AG04450 (cell line): ENCODE measurements at regions of chr1 and their contacts with region 1.

Region 1: GRCh38 chr1:179002552-179003345 is 22.9 kb upstream of the FAM20B start:
- DNase-seq: peak; percentile 32
- H3K4me3 ChIP-seq: no peak overlapping the region
- H3K27ac ChIP-seq: no peak overlapping the region
- H3K27me3 ChIP-seq: no peaks in the 10 kb centered on the region
- CTCF ChIP-seq: peak; percentile 97

Region 2: GRCh38 chr1:178300352-178300699 is 702.4 kb before region 1 on chr1:
- CTCF ChIA-PET with region 1: interaction called, 16 read pairs
- POLR2A ChIA-PET with region 1: no interaction called
- DNase-seq: no peak
- H3K4me3 ChIP-seq: no peak overlapping the region
- H3K27ac ChIP-seq: no peak overlapping the region
- H3K27me3 ChIP-seq: no peaks in the 10 kb centered on the region
- CTCF ChIP-seq: no peak

Region 3: GRCh38 chr1:178532392-178532791 is 470.4 kb before region 1 on chr1:
- CTCF ChIA-PET with region 1: interaction called, 176 read pairs
- POLR2A ChIA-PET with region 1: no interaction called
- DNase-seq: peak; percentile 63
- H3K4me3 ChIP-seq: no peak overlapping the region
- H3K27ac ChIP-seq: no peak overlapping the region
- H3K27me3 ChIP-seq: no peaks in the 10 kb centered on the region
- CTCF ChIP-seq: peak; percentile 90

Region 4: DNA sequence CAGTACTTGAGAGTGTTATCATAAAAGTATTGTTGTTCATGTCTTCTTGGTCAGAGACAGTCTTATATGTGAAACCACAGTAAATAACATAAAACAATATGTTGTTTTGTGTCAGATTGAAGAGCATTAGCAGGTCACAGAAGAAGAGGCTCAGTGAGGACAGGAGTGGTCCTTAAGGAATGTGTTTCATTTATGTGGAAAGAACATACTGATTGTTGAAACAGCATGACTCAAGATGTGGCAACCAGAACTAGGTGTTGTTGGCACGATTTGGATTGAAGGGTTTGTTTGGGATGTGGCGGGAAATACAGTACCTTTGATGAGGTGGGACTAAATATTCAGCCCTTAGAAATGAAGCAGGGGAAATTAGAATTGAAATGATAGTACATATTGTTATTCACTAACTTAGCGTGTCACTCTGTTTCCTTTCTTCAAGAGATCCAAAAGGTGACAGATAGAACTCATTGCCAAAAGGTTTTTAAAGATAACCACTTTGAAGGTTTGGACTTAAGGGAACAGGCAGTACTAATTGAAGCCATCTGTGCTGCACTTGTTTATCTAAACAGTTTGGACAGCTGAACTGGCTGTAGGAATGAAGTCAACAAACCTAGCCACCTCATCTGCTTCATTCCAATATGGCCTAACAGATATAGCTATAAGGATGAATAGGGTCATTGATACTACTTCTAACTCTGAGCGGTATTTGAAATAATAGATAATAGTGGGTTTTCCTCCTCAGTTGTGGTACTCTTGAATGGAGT is 263.3 kb before region 1 on chr1:
- CTCF ChIA-PET with region 1: interaction called, 10 read pairs
- POLR2A ChIA-PET with region 1: no interaction called
- DNase-seq: peak; percentile 51
- H3K4me3 ChIP-seq: no peak overlapping the region
- H3K27ac ChIP-seq: no peak overlapping the region
- H3K27me3 ChIP-seq: no peaks in the 10 kb centered on the region
- CTCF ChIP-seq: no peak

Region 5: GRCh38 chr1:178849918-178850317 is 152.8 kb before region 1 on chr1:
- CTCF ChIA-PET with region 1: interaction called, 15 read pairs
- POLR2A ChIA-PET with region 1: no interaction called
- DNase-seq: no peak
- H3K4me3 ChIP-seq: no peak overlapping the region
- H3K27ac ChIP-seq: no peak overlapping the region
- H3K27me3 ChIP-seq: no peaks in the 10 kb centered on the region
- CTCF ChIP-seq: no peak

Region 6: GRCh38 chr1:178908358-178908757 is 94.4 kb before region 1 on chr1:
- CTCF ChIA-PET with region 1: interaction called, 10 read pairs
- POLR2A ChIA-PET with region 1: no interaction called
- DNase-seq: no peak
- H3K4me3 ChIP-seq: no peak overlapping the region
- H3K27ac ChIP-seq: no peak overlapping the region
- H3K27me3 ChIP-seq: no peaks in the 10 kb centered on the region
- CTCF ChIP-seq: no peak

Region 7: DNA sequence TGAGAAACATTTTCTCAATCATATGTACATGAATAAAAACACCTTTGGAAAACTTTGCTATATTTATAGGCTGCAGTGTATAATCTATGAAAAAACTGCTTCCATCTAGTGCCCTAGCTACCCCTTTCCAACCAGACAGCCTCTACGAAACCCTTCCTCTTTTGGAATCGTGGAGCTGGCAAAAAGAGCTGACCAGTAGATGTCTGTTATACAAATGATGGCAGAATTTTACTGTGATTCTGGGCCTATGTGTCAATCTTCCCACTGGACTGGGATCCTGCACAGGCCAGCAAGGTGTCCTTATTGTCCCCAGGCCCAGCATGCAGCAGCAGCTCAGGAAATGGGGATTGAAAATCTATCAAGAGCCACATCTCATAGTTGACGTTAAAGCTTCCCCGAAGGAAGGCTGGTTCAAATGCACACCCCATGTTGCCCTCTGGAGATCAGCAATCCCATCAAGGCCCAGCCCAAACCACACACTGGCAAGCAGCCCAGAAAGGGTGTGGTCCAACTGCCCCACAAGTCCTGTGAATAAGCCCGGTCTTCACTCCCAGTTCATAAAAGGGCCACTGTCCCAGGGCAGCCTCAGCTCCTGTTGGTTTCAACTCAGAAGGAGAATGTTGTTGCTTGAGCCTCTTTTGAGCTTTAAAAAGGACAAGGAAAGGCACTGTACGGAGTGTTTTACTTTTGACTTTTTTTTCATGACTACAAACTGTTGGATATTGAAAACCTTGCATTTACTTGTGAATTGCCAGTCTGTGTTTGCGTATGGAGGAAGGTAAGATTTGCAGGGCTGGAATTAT is 14.2 kb after region 1 on chr1:
- CTCF ChIA-PET with region 1: interaction called, 25 read pairs
- POLR2A ChIA-PET with region 1: no interaction called
- DNase-seq: peak; percentile 47
- H3K4me3 ChIP-seq: no peak overlapping the region
- H3K27ac ChIP-seq: no peak overlapping the region
- H3K27me3 ChIP-seq: no peaks in the 10 kb centered on the region
- CTCF ChIP-seq: no peak